ENCODE measurements at regions of chr11 and their contacts with region 1.

Region 1: DNA sequence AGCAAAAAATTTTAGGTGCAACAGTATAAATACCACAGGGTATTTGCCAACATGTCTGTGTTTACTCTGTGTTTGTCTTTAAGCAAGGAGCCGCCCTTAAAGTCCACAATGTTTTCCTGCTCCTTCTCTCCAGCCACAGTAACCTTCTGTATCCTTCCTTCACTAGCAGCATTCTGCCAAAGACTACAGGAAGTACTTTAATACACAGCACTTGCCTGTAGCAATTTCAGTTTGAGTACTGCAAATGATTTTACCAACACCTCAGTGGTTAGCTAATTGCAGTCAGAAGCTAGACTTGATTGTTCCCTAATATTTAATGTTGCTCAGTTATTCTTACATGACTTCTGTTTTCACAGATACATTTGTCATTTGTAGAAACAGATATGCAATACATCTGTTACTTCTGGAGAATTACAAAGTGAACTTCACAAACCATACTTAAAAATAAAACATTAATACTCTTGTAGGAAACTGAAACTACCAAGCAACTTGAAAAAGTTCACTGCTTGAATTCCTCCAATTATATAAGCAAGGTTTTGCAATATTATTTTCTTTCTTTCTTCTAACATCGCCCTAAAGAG is 69.1 kb downstream of the FCHSD2 start:
- DNase-seq: peak; percentile 81
- ATAC-seq: peak; percentile 99
- H3K4me3 ChIP-seq: peak overlapping the region; percentile 16
- H3K27ac ChIP-seq: peak overlapping the region; percentile 15
- H3K4me1 ChIP-seq: peaks cover 25% of the 10 kb centered on the region
- H3K27me3 ChIP-seq: no peaks in the 10 kb centered on the region
- CTCF ChIP-seq: no peak

Region 2: GRCh38 chr11:72940417-72940816 is 132.6 kb before region 1 on chr11:
- CTCF ChIA-PET with region 1: no interaction called
- POLR2A ChIA-PET with region 1: no interaction called
- intact Hi-C with region 1: loop called (anchors 5 kb)
- DNase-seq: no peak
- ATAC-seq: no peak
- H3K4me3 ChIP-seq: no peak overlapping the region
- H3K27ac ChIP-seq: no peak overlapping the region
- H3K4me1 ChIP-seq: no peaks in the 10 kb centered on the region
- H3K27me3 ChIP-seq: no peaks in the 10 kb centered on the region
- CTCF ChIP-seq: no peak

Region 3: DNA sequence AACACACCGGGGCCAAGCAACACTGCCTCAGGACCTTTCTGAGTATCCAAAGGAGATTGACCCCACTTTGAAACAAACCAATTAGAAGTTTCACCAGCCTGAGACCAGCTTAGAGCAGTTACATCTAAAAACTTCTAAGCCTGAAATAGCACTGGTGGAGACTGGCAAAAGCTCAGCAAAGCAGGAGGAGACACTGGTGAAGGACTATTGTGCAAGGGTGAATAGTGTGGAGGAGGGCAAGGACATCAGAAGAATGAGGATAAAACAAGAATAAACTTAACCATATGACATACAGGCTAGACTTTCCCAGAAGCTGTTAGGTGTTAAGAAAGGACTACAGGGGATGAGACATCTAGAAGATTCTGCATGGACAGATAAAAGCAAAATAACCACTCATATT is 83.3 kb before region 1 on chr11:
- CTCF ChIA-PET with region 1: no interaction called
- POLR2A ChIA-PET with region 1: no interaction called
- intact Hi-C with region 1: no loop called
- DNase-seq: no peak
- ATAC-seq: no peak
- H3K4me3 ChIP-seq: no peak overlapping the region
- H3K27ac ChIP-seq: no peak overlapping the region
- H3K4me1 ChIP-seq: peaks cover 1% of the 10 kb centered on the region
- H3K27me3 ChIP-seq: no peaks in the 10 kb centered on the region
- CTCF ChIP-seq: no peak

Region 4: GRCh38 chr11:73034777-73035176 is 38.2 kb before region 1 on chr11:
- CTCF ChIA-PET with region 1: no interaction called
- POLR2A ChIA-PET with region 1: no interaction called
- intact Hi-C with region 1: loop called (anchors 1 kb)
- DNase-seq: peak; percentile 35
- ATAC-seq: peak; percentile 61
- H3K4me3 ChIP-seq: no peak overlapping the region
- H3K27ac ChIP-seq: no peak overlapping the region
- H3K4me1 ChIP-seq: peaks cover 6% of the 10 kb centered on the region; the same call in 1 of the 2 replicates
- H3K27me3 ChIP-seq: no peaks in the 10 kb centered on the region
- CTCF ChIP-seq: no peak

Region 5: DNA sequence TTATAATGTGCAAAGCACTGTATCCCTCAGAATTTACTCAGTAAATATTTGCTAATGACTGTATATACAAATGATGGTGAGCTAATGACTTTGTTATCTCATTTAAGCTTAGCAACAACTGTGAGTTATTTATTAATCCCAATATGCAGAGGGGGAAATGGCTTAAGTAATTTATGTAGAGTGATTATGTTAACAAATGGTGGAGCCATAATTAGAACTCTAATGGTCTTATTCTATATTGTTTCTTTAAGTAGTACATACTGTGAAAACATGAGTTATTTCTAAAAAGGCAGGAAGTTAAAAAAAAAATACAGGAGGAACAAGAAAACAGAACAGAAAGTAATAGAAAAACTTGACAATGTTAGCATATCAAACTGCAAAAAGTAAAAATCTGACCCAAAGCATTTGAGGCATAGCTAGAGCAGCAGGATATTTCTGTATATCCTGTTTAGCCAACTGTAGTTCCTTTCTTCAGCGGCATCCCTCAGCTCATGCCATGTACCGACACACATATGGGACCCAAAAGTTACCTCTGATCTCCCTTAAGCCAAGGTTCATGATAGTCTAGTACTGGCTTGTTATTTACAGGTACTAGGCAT is 25.1 kb before region 1 on chr11:
- CTCF ChIA-PET with region 1: no interaction called
- POLR2A ChIA-PET with region 1: no interaction called
- intact Hi-C with region 1: loop called (anchors 2 kb)
- DNase-seq: peak; percentile 26
- ATAC-seq: peak; percentile 61
- H3K4me3 ChIP-seq: no peak overlapping the region
- H3K27ac ChIP-seq: no peak overlapping the region
- H3K4me1 ChIP-seq: peaks cover 8% of the 10 kb centered on the region
- H3K27me3 ChIP-seq: no peaks in the 10 kb centered on the region
- CTCF ChIP-seq: no peak

Region 6: DNA sequence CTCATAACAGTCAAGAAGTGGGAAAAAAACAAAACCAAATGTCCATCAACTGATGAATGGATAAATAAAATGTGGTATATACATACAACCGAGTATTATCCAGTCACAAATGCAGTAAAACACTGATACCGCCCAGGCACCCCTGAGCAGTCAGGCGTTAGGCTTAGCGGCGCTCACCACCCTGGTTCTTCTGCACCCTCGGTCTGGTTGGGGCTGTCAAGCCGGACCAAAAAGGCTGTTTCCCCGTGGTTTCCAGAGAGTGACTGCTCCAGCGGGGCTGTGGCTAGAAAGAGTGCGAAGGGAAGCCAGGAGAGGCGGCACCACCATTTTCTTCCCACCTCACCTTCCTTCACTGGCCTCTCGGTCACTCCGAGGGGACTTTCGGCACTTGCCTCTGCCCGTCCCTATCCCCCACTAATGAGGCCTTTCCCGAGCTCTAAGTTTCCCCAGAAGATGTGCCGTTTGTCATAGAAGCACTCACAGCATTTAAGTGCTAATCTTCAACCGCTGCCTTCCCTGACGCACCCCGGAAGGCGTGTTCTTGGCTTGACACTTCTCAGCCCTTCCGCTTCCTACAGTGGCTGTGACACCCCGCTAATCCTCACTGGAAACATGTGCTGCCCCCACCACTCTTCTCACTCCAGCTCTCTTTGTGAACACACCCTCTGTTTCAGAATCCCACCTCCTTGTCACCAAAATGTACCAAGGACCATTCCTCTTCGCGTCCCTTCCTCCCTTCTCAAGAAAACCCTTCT is 26.7 kb after region 1 on chr11:
- CTCF ChIA-PET with region 1: no interaction called
- POLR2A ChIA-PET with region 1: no interaction called
- intact Hi-C with region 1: no loop called
- DNase-seq: no peak
- ATAC-seq: no peak
- H3K4me3 ChIP-seq: no peak overlapping the region
- H3K27ac ChIP-seq: no peak overlapping the region
- H3K4me1 ChIP-seq: no peaks in the 10 kb centered on the region
- H3K27me3 ChIP-seq: no peaks in the 10 kb centered on the region
- CTCF ChIP-seq: no peak

Region 7: GRCh38 chr11:73236854-73237253 is 163.9 kb after region 1 on chr11:
- CTCF ChIA-PET with region 1: no interaction called
- POLR2A ChIA-PET with region 1: no interaction called
- intact Hi-C with region 1: no loop called
- DNase-seq: peak; percentile 77
- ATAC-seq: peak; percentile 59
- H3K4me3 ChIP-seq: no peak overlapping the region
- H3K27ac ChIP-seq: no peak overlapping the region
- H3K4me1 ChIP-seq: peaks cover 38% of the 10 kb centered on the region
- H3K27me3 ChIP-seq: no peaks in the 10 kb centered on the region
- CTCF ChIP-seq: peak; percentile 95

Measured in PC-3 (cell line).